CD8-positive, alpha-beta T cell (primary cell): ENCODE measurements at regions of chr5 and their contacts with region 1.

Region 1: GRCh38 chr5:73498057-73499008 is at the start of gene BTF3:
- DNase-seq: peak; percentile 77 to 97 (median 93)
- ATAC-seq: peak; percentile 89
- H3K4me3 ChIP-seq: peak within 1 kb of the TSS; percentile 95 to 96
- H3K4me3 Mint-ChIP-seq: peak within 1 kb of the TSS; percentile 97
- H3K27ac ChIP-seq: peak within 1 kb of the TSS; percentile 97 to 99
- H3K27ac Mint-ChIP-seq: peak within 1 kb of the TSS; percentile 100
- H3K4me1 ChIP-seq: peaks cover 38% of the 10 kb centered on the region
- H3K4me1 Mint-ChIP-seq: peaks cover 50% of the 10 kb centered on the region
- H3K27me3 ChIP-seq: no peaks in the 10 kb centered on the region
- H3K27me3 Mint-ChIP-seq: peaks cover 5% of the 10 kb centered on the region
- CTCF ChIP-seq: no peak
- total RNA-seq, gene BTF3: 808 to 815 TPM

Region 2: DNA sequence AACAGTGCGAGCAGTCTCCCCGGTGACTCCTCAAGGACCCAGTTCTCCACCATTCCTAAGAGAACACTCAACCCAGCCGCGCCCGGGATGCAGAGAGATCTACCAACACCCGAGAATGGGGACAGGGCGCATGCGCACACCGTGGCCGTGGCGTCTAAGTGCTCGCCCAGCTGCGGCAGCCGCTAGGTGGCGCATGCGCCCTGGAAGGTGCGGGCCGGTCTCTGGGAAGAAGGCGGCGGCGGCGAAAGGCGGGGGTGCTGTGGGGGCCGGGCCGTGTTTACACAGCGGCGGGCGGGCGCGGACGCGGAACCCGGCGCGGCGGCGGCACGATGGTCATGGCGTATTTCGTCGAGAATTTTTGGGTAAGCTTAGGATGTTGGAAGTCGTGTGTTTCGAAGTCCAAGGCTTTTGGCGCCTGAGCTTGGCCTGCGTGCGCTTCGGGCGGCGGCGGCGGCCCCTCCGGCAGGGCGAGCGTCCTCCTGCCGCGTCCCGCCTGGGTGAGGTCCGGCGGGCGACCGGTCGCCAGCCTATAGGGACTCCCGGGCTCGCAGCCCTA is 542.5 kb before region 1 on chr5 and contains the start of gene FCHO2:
- CTCF ChIA-PET with region 1: no interaction called
- POLR2A ChIA-PET with region 1: no interaction called
- intact Hi-C with region 1: loop called (anchors 1 to 5 kb)
- DNase-seq: peak; percentile 88 to 98 (median 96)
- ATAC-seq: peak; percentile 90
- H3K4me3 ChIP-seq: peak within 1 kb of the TSS; percentile 61 to 95
- H3K4me3 Mint-ChIP-seq: peak within 1 kb of the TSS; percentile 95
- H3K27ac ChIP-seq: no peak within 1 kb of the TSS
- H3K27ac Mint-ChIP-seq: peak within 1 kb of the TSS; percentile 88
- H3K4me1 ChIP-seq: peaks cover 12% of the 10 kb centered on the region
- H3K4me1 Mint-ChIP-seq: peaks cover 15% of the 10 kb centered on the region
- H3K27me3 ChIP-seq: peaks cover 6 to 9% of the 10 kb centered on the region in 2 experiments
- H3K27me3 Mint-ChIP-seq: peaks cover 41% of the 10 kb centered on the region
- CTCF ChIP-seq: peak; percentile 65
- total RNA-seq, gene FCHO2: 2.4 to 2.9 TPM

Region 3: DNA sequence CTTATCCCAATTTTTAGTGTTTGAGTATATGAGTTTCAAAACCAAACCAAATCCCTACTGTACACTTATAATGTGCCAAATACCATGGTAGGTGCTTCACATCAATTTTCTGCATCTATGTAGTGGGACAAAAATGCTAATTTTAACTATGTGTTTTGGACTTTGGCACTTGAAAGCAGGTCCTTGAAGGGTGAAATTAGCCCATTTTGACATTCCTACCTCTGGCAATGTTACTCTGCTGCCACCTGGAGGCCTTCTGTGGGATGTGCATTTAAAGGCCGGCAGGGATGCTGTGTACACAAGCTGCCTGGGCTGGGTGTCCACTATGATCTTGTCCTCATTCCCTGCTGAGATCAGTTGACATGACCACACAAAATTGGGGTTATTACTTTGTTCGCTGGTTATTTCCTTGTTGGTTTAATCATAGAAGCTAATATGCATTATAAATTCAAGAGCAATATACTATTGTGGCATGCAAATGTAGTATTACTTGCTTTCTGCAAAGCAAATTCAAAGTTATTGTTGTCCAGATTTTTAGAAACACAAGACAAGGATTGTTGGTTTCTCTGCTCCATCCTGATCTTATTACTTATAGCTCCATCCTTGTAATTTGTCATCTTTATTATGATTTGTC is 294.5 kb after region 1 on chr5:
- CTCF ChIA-PET with region 1: no interaction called
- POLR2A ChIA-PET with region 1: no interaction called
- intact Hi-C with region 1: no loop called
- DNase-seq: peak; percentile 30 to 75 (median 58)
- ATAC-seq: no peak
- H3K4me3 ChIP-seq: no peak overlapping the region
- H3K4me3 Mint-ChIP-seq: no peak overlapping the region
- H3K27ac ChIP-seq: no peak overlapping the region
- H3K27ac Mint-ChIP-seq: no peak overlapping the region
- H3K4me1 ChIP-seq: no peaks in the 10 kb centered on the region
- H3K4me1 Mint-ChIP-seq: no peaks in the 10 kb centered on the region
- H3K27me3 ChIP-seq: no peaks in the 10 kb centered on the region
- H3K27me3 Mint-ChIP-seq: peaks cover 18% of the 10 kb centered on the region
- CTCF ChIP-seq: peak; percentile 80

Region 4: DNA sequence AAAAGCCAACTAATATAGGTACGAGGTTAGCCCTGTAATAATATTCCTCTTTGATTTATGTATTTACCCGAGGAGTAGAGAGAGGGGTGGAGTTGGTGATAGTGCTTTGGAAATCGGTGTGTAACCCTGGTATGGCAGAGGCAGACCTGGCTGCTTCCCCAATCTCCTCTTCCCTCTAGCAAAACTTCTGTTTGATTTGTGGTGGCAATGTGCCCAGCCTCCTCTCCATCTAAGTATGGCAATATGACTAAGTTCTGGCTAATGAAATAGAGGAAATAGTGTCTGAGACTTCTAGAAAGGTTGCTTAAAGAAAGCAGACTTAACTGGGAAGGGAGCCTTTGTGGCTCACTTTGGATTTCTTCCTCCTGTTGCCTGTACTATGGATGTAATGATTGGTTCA is 651.1 kb after region 1 on chr5:
- CTCF ChIA-PET with region 1: no interaction called
- POLR2A ChIA-PET with region 1: no interaction called
- intact Hi-C with region 1: no loop called
- DNase-seq: no peak
- ATAC-seq: no peak
- H3K4me3 ChIP-seq: no peak overlapping the region
- H3K4me3 Mint-ChIP-seq: no peak overlapping the region
- H3K27ac ChIP-seq: no peak overlapping the region
- H3K27ac Mint-ChIP-seq: no peak overlapping the region
- H3K4me1 ChIP-seq: no peaks in the 10 kb centered on the region
- H3K4me1 Mint-ChIP-seq: no peaks in the 10 kb centered on the region
- H3K27me3 ChIP-seq: no peaks in the 10 kb centered on the region
- H3K27me3 Mint-ChIP-seq: peaks cover 6% of the 10 kb centered on the region
- CTCF ChIP-seq: no peak